Caco-2 (cell line): ENCODE measurements at regions of chr11 and their contacts with region 1.

Region 1: DNA sequence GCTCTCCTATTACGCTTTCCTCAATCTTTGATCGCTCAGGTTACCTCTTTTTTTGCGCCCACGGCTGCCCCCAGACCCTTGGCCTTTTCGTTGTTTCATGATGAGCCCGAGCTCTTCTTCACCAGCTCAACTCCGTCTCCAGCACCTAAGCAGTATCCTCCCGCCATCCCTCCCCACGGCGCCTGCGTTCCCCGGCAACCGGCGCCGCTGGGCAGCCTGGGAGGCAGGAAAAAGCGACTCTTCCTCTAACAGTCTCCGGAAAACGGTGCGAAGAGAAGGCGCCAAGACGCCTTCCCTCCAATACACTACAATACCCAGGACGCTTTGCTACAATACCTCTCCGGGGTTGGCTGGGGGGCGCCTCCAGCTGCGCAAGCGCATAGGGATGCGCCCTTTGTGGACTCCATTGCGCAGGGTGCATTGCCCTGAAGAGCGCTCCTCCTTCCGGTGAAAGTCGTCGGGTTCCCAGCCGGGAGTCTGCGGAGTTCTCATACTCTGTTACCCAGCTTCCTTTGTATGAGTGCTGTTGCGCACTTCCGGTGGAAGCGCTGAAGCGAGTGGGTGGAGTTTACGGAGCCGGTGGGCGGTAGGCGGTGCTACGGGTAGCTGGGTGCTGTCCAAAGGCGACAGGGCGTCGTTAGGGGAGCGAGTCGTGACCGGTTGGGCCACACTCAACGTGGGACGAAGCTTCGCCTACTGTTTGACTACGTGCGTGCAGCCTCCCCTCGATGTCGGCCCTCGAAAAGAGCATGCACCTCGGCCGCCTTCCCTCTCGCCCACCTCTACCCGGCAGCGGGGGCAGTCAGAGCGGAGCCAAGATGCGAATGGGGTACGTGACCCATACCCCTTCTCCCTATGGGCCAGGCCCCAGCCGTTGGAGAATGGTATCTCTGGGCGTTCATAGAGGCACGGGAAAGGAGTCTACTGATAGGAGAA is at the starts of genes C2CD3 and PPME1:
- DNase-seq: peak; percentile 100
- H3K4me3 ChIP-seq: peak within 1 kb of the TSS; percentile 75
- H3K4me3 Mint-ChIP-seq: no peak within 1 kb of the TSS
- H3K27ac Mint-ChIP-seq: no peak within 1 kb of the TSS
- H3K4me1 ChIP-seq: peaks cover 32% of the 10 kb centered on the region
- H3K4me1 Mint-ChIP-seq: peaks cover 6% of the 10 kb centered on the region
- H3K27me3 ChIP-seq: no peaks in the 10 kb centered on the region
- H3K27me3 Mint-ChIP-seq: no peaks in the 10 kb centered on the region
- CTCF ChIP-seq: peak; percentile 59 to 63
- total RNA-seq, gene C2CD3: 47.0 and 47.5 TPM in 2 replicates
- total RNA-seq, gene PPME1: 109 and 114 TPM in 2 replicates

Region 2: DNA sequence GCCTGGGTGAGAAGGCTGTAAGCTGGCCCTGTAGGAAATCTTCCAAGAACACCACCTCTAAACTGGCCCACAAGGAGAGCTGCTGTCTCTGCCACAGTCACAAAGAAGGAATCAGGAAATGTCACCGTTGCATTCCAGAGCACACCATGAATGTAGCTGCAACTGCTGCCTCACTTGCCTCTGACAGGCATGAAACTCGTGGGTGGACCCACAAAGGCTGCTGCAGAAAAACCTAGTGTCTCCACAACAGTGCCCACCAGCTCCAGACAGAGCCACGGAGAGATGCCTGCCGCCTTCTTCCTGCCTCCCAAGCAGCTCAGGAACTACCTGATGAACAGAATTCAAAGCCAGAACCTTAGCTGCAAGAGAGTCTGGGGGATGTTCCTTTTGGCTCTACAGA is 209.6 kb before region 1 on chr11:
- CTCF ChIA-PET with region 1: interaction called, 11 read pairs
- POLR2A ChIA-PET with region 1: no interaction called
- intact Hi-C with region 1: loop called (anchors 5 kb)
- DNase-seq: peak in 1 of 2 experiments; percentile 32
- H3K4me3 ChIP-seq: no peak overlapping the region
- H3K4me3 Mint-ChIP-seq: no peak overlapping the region
- H3K27ac Mint-ChIP-seq: no peak overlapping the region
- H3K4me1 ChIP-seq: no peaks in the 10 kb centered on the region
- H3K4me1 Mint-ChIP-seq: peaks cover 1% of the 10 kb centered on the region
- H3K27me3 ChIP-seq: no peaks in the 10 kb centered on the region; the same call in 1 of the 2 replicates
- H3K27me3 Mint-ChIP-seq: no peaks in the 10 kb centered on the region
- CTCF ChIP-seq: no peak

Region 3: DNA sequence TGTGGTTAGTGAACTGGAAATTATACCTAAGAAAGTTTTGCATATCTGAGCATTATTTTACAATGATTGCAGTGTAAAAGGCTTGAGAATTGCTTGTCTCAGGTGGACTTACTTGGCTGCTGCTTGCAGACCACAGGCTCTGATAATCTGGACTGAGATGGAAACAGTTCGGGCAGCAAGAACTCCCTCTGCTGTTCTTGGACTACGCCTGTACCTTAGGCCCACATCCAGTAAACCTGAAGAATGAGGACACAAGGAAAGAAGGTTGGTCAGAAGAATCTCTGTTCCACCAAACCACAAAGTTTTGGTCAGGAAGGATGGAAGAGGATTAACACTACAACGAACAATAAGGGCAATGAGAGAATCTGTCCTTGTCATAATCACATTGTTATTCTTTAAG is 80.3 kb before region 1 on chr11:
- CTCF ChIA-PET with region 1: interaction called, 13 read pairs
- POLR2A ChIA-PET with region 1: interaction called, 10 read pairs
- intact Hi-C with region 1: loop called (anchors 2 kb)
- DNase-seq: peak; percentile 62
- H3K4me3 ChIP-seq: no peak overlapping the region
- H3K4me3 Mint-ChIP-seq: no peak overlapping the region
- H3K27ac Mint-ChIP-seq: no peak overlapping the region
- H3K4me1 ChIP-seq: peaks cover 5% of the 10 kb centered on the region
- H3K4me1 Mint-ChIP-seq: peaks cover 4% of the 10 kb centered on the region
- H3K27me3 ChIP-seq: no peaks in the 10 kb centered on the region
- H3K27me3 Mint-ChIP-seq: no peaks in the 10 kb centered on the region
- CTCF ChIP-seq: peak; percentile 54 to 90

Region 4: DNA sequence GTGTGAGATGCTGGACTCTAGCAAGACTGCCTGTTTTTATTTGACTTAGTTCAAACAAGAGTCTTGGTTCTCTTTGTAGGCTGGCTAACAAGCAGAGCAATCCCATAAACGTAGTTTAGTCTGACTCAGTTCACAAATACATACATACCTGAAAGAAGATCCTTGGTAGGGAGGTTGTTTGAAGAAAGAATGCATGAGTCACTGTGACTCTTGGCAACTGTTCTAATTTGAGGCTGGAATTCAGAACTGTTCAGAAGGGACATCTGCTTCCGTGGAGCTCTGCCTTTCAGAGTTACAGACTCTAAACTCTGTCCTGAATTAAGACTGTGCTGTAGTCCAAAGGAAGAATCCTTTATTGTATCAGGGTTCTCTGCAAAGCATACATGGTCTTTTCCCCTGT is 32.4 kb before region 1 on chr11:
- CTCF ChIA-PET with region 1: interaction called, 14 read pairs
- POLR2A ChIA-PET with region 1: interaction called, 42 read pairs
- intact Hi-C with region 1: loop called (anchors 1 kb)
- DNase-seq: peak; percentile 75 to 82
- H3K4me3 ChIP-seq: no peak overlapping the region
- H3K4me3 Mint-ChIP-seq: peak overlapping the region; percentile 62
- H3K27ac Mint-ChIP-seq: peak overlapping the region; percentile 95
- H3K4me1 ChIP-seq: peaks cover 67% of the 10 kb centered on the region
- H3K4me1 Mint-ChIP-seq: peaks cover 60% of the 10 kb centered on the region
- H3K27me3 ChIP-seq: no peaks in the 10 kb centered on the region
- H3K27me3 Mint-ChIP-seq: no peaks in the 10 kb centered on the region
- CTCF ChIP-seq: no peak

Region 5: DNA sequence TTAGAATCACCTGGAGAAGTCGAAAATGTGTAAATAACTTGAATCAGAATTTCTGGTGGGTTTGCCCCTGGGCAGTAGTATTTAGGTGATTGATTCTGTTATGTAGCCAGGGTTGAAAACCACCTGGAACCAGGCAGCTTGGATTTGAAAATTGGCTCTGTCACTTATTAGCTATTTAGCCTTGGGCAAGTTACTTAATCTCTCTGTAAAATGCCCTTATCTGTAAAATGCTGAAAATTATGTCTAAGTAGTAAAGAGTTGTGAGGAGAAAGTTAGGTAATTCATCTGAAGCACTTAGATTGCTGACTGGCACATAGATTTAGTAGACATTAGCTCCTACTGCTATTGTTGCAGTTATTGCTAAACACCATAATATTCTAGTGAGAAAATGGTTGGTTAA is 49.4 kb after region 1 on chr11:
- CTCF ChIA-PET with region 1: no interaction called
- POLR2A ChIA-PET with region 1: interaction called, 14 read pairs
- intact Hi-C with region 1: no loop called
- DNase-seq: peak in 1 of 2 experiments; percentile 25
- H3K4me3 ChIP-seq: no peak overlapping the region
- H3K4me3 Mint-ChIP-seq: no peak overlapping the region
- H3K27ac Mint-ChIP-seq: no peak overlapping the region
- H3K4me1 ChIP-seq: peaks cover 12% of the 10 kb centered on the region; the same call in 1 of the 2 replicates
- H3K4me1 Mint-ChIP-seq: peaks cover 8% of the 10 kb centered on the region
- H3K27me3 ChIP-seq: no peaks in the 10 kb centered on the region
- H3K27me3 Mint-ChIP-seq: no peaks in the 10 kb centered on the region
- CTCF ChIP-seq: no peak